ENCODE measurements at regions of chr10 and their contacts with region 1.

Region 1: GRCh38 chr10:114173921-114174694 is at the start of gene CCDC186:
- DNase-seq: peak; percentile 96
- H3K4me3 Mint-ChIP-seq: peak within 1 kb of the TSS; percentile 97
- H3K27ac Mint-ChIP-seq: peak within 1 kb of the TSS; percentile 99
- H3K4me1 Mint-ChIP-seq: peaks cover 6% of the 10 kb centered on the region
- H3K27me3 Mint-ChIP-seq: no peaks in the 10 kb centered on the region
- CTCF ChIP-seq: no peak
- total RNA-seq, gene CCDC186: 20.6 and 20.9 TPM in 2 replicates

Region 2: GRCh38 chr10:114151486-114151885 is 22.6 kb before region 1 on chr10:
- CTCF ChIA-PET with region 1: interaction called, 4 read pairs
- POLR2A ChIA-PET with region 1: interaction called, 31 read pairs
- intact Hi-C with region 1: loop called (anchors 1 kb)
- DNase-seq: peak; percentile 87
- H3K4me3 Mint-ChIP-seq: no peak overlapping the region
- H3K27ac Mint-ChIP-seq: no peak overlapping the region
- H3K4me1 Mint-ChIP-seq: peaks cover 10% of the 10 kb centered on the region
- H3K27me3 Mint-ChIP-seq: no peaks in the 10 kb centered on the region
- CTCF ChIP-seq: no peak

Region 3: DNA sequence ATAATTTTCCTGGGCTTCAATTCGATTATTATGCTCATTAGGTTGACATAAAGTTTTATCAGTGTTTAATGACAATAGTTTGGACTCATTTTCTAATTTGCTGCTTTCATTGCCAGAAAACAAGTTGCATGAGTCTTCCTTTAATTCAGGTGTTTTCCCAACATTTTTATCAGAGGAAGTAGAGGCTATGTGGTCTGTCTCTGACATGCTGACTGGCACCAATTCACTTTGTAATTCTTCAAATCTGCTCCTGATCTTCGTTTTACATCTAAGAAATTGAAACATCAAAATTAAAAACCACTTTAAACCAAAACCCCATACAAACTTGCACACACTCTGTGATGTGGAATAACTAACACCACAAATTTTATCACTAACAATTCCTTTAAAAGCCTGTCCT is 11.0 kb before region 1 on chr10:
- CTCF ChIA-PET with region 1: interaction called, 10 read pairs
- POLR2A ChIA-PET with region 1: interaction called, 20 read pairs
- intact Hi-C with region 1: no loop called
- DNase-seq: no peak
- H3K4me3 Mint-ChIP-seq: no peak overlapping the region
- H3K27ac Mint-ChIP-seq: peak overlapping the region; percentile 41
- H3K4me1 Mint-ChIP-seq: peaks cover 9% of the 10 kb centered on the region
- H3K27me3 Mint-ChIP-seq: no peaks in the 10 kb centered on the region
- CTCF ChIP-seq: no peak

Region 4: GRCh38 chr10:114223066-114223465 is 49.0 kb after region 1 on chr10:
- CTCF ChIA-PET with region 1: no interaction called
- POLR2A ChIA-PET with region 1: no interaction called
- intact Hi-C with region 1: no loop called
- DNase-seq: no peak
- H3K4me3 Mint-ChIP-seq: no peak overlapping the region
- H3K27ac Mint-ChIP-seq: no peak overlapping the region
- H3K4me1 Mint-ChIP-seq: no peaks in the 10 kb centered on the region
- H3K27me3 Mint-ChIP-seq: no peaks in the 10 kb centered on the region
- CTCF ChIP-seq: no peak

Region 5: GRCh38 chr10:114245121-114245791 is 71.1 kb after region 1 on chr10:
- CTCF ChIA-PET with region 1: interaction called, 5 read pairs
- POLR2A ChIA-PET with region 1: interaction called, 107 read pairs
- intact Hi-C with region 1: no loop called
- DNase-seq: peak; percentile 88
- H3K4me3 Mint-ChIP-seq: peak overlapping the region; percentile 53
- H3K27ac Mint-ChIP-seq: peak overlapping the region; percentile 24
- H3K4me1 Mint-ChIP-seq: peaks cover 31% of the 10 kb centered on the region
- H3K27me3 Mint-ChIP-seq: no peaks in the 10 kb centered on the region
- CTCF ChIP-seq: no peak

Region 6: GRCh38 chr10:114271779-114272167 is 97.7 kb after region 1 on chr10:
- CTCF ChIA-PET with region 1: no interaction called
- POLR2A ChIA-PET with region 1: interaction called, 75 read pairs
- intact Hi-C with region 1: loop called (anchors 2 kb)
- DNase-seq: peak; percentile 90
- H3K4me3 Mint-ChIP-seq: no peak overlapping the region
- H3K27ac Mint-ChIP-seq: peak overlapping the region; percentile 81
- H3K4me1 Mint-ChIP-seq: peaks cover 25% of the 10 kb centered on the region
- H3K27me3 Mint-ChIP-seq: no peaks in the 10 kb centered on the region
- CTCF ChIP-seq: no peak

Region 7: DNA sequence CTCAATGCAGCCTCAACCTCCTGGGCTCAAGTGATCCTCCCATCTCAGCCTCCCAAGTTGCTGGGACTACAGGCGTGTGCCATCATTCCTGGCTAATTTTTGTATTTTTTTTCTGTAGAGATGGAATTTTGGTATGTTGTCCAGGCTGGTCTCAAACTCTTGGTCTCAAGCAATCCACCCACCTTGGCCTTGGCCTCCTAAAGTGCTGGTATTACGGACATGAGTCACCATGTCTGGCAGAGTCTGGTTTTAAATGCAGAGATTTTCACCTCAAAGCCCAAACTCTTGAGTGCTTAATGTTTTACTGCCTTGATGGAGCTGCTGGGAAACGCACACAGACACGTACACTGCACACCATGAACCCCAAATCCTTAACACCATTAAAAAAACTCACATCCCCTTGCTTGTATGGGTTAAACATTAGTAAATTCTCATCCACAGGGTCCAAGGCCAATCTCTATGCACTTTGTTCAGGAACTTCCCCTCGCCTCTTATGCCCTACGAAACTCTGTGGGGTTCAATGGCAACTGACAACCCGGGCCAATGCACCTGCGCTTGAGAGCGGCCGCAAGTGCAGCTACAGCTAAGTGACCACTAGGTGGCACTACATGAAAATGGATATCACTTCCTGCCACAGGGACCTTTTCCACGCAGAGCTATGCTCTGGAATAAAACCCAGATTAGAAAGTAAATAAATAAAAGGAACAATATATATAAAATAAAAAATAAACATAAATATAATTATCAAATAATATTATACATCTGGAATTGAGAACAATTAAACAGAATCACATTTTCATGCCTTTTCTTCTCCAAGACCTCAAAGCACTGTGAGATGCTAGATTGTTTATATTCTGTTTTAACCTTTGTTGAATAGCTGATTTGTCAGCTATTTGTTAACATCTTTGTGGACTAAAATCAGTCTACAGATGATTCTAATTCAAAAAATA is 297.1 kb after region 1 on chr10:
- CTCF ChIA-PET with region 1: no interaction called
- POLR2A ChIA-PET with region 1: no interaction called
- intact Hi-C with region 1: no loop called
- DNase-seq: peak; percentile 75
- H3K4me3 Mint-ChIP-seq: no peak overlapping the region
- H3K27ac Mint-ChIP-seq: no peak overlapping the region
- H3K4me1 Mint-ChIP-seq: peaks cover 6% of the 10 kb centered on the region
- H3K27me3 Mint-ChIP-seq: no peaks in the 10 kb centered on the region
- CTCF ChIP-seq: peak; percentile 80

Measured in MCF 10A (cell line).